AG04450 (cell line): ENCODE measurements at regions of chr5 and their contacts with region 1.

Region 1: GRCh38 chr5:157253547-157253946 is 12.4 kb upstream of the CYFIP2 start:
- DNase-seq: peak; percentile 11
- H3K4me3 ChIP-seq: no peak overlapping the region
- H3K27ac ChIP-seq: no peak overlapping the region
- H3K27me3 ChIP-seq: peaks cover 2% of the 10 kb centered on the region
- CTCF ChIP-seq: peak; percentile 96

Region 2: GRCh38 chr5:157263496-157264090 is 10.0 kb after region 1 on chr5:
- CTCF ChIA-PET with region 1: interaction called, 20 read pairs
- POLR2A ChIA-PET with region 1: no interaction called
- DNase-seq: no peak
- H3K4me3 ChIP-seq: no peak overlapping the region
- H3K27ac ChIP-seq: no peak overlapping the region
- H3K27me3 ChIP-seq: peaks cover 32% of the 10 kb centered on the region
- CTCF ChIP-seq: no peak

Region 3: DNA sequence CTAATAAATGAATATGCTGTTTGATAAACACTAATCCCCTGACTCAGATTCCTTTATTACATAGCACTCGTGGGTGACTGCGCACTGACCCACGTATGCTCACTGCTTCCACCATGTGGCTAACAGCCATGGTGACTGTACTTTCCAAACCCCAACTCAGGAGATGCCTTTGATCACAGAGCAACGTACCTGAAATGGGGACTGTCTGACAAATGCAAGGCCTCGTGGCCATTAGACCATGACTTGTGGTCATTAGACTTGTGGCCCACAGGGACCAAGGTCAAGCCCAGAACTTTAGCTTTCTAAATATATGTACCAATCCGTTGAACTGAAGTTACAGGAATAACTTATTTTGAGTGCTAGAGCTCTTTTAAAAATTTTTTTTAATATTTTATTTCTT is 58.9 kb after region 1 on chr5:
- CTCF ChIA-PET with region 1: interaction called, 45 read pairs
- POLR2A ChIA-PET with region 1: no interaction called
- DNase-seq: no peak
- H3K4me3 ChIP-seq: no peak overlapping the region
- H3K27ac ChIP-seq: no peak overlapping the region
- H3K27me3 ChIP-seq: peaks cover 12% of the 10 kb centered on the region
- CTCF ChIP-seq: peak; percentile 88

Region 4: DNA sequence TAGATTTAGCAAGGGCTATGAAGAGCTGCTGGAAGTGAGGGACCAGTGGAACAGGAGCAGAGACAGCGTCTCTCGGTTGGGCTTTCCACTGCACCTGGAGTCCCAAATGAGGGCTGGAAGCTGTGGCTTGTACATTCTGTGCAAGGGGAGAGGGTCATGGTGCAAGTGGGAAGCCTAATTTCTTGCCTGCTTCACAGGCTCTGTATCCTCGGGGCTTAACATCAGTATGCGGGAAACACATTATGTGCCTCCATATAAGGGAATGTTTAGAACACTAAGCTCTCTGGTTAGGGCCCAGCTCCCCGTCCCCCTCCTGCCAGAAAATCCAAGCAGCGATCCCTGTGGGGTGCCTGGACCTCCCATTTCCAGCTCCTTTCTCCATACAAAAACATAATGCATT is 117.4 kb after region 1 on chr5:
- CTCF ChIA-PET with region 1: no interaction called
- POLR2A ChIA-PET with region 1: no interaction called
- DNase-seq: peak; percentile 57
- H3K4me3 ChIP-seq: no peak overlapping the region
- H3K27ac ChIP-seq: peak overlapping the region; percentile 85
- H3K27me3 ChIP-seq: no peaks in the 10 kb centered on the region
- CTCF ChIP-seq: no peak